ENCODE measurements at regions of chr11 and their contacts with region 1.

Region 1: GRCh38 chr11:1908618-1909017 is 10.9 kb upstream of the TNNT3 start:
- DNase-seq: peak; percentile 86
- H3K4me3 ChIP-seq: peak overlapping the region in 1 of 3 experiments; percentile 22
- H3K27ac ChIP-seq: peak overlapping the region; percentile 74
- H3K4me1 ChIP-seq: peaks cover 33% of the 10 kb centered on the region
- H3K27me3 ChIP-seq: no peaks in the 10 kb centered on the region
- CTCF ChIP-seq: no peak
- POLR2A ChIP-seq: peak; percentile 21

Region 2: DNA sequence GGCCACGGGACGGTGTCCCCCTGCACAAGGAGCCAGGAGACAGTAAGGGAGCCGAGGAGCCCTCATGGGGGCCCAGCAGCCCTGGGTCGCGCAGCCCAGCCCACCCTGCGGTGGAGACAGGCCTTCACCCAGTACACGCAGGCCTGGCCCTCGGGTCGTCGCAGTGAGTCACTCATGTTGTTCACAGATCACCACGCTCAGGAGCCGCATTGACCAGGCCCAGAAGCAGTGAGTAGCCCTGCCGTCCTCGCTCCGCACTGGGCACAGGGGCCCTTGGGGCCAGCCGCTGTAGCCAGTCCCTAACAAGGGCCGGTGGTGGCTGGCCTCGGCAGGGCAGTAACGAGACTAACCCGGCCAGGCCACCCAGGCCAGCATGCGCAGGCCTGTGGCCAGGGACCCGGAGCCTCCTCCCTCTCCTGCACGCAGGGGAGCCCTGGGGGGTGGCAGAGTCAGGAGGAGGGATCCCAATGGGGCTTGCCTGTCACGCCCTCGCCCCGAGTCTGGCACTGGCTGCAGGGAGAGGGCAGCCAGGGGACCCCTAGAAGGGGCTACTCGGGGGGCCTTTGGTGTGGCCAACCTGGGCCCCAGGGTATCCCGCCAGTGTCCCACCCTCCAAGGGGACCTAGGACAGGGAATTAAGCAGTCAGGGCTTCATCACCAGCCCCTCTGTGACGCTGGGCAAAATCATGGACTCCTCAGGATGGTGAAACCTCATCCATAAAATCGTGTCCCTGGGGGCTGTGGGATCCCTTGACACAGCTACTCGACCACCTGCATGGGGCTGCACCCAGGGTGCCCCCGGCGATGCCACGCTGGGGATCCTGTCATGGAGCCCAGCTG is 28.4 kb after region 1 on chr11:
- CTCF ChIA-PET with region 1: interaction called, 4 read pairs
- POLR2A ChIA-PET with region 1: no interaction called
- dilution Hi-C with region 1: no loop called
- intact Hi-C with region 1: loop called (anchors 2 kb)
- DNase-seq: no peak
- H3K4me3 ChIP-seq: no peak overlapping the region
- H3K27ac ChIP-seq: no peak overlapping the region
- H3K4me1 ChIP-seq: no peaks in the 10 kb centered on the region
- H3K27me3 ChIP-seq: no peaks in the 10 kb centered on the region
- CTCF ChIP-seq: no peak
- POLR2A ChIP-seq: no peak

Region 3: GRCh38 chr11:1943977-1944376 is 35.4 kb after region 1 on chr11:
- CTCF ChIA-PET with region 1: interaction called, 13 read pairs
- POLR2A ChIA-PET with region 1: interaction called, 4 read pairs
- dilution Hi-C with region 1: no loop called
- intact Hi-C with region 1: no loop called
- DNase-seq: peak; percentile 24
- H3K4me3 ChIP-seq: no peak overlapping the region
- H3K27ac ChIP-seq: no peak overlapping the region
- H3K4me1 ChIP-seq: no peaks in the 10 kb centered on the region
- H3K27me3 ChIP-seq: no peaks in the 10 kb centered on the region
- CTCF ChIP-seq: no peak
- POLR2A ChIP-seq: no peak

Region 4: GRCh38 chr11:2325719-2326118 is 417.1 kb after region 1 on chr11:
- CTCF ChIA-PET with region 1: no interaction called
- POLR2A ChIA-PET with region 1: no interaction called
- dilution Hi-C with region 1: no loop called
- intact Hi-C with region 1: no loop called
- DNase-seq: no peak
- H3K4me3 ChIP-seq: no peak overlapping the region
- H3K27ac ChIP-seq: no peak overlapping the region
- H3K4me1 ChIP-seq: no peaks in the 10 kb centered on the region
- H3K27me3 ChIP-seq: no peaks in the 10 kb centered on the region
- CTCF ChIP-seq: no peak
- POLR2A ChIP-seq: no peak